MCF 10A (cell line): ENCODE measurements at regions of chr16 and their contacts with region 1.

Region 1: DNA sequence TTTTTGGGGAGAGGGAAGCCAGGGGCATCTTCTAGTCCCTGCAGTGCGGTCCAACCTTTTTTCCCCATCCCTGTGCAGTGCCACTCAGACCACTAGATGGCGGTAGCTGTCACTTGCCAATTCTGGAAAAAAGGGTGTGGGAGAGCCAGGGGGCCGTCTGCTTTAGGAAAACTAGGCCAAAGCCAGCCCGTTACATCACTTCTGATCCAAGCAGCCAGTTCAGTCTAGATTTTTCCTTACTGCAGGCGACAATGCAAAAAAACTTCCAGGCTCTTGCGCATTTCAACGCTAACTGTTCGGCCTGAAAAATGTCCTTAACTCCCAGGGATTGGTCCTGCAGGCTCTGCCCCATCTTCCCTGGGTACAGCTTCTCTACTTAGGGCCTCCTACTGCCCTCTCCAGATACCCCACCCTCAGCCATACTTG is 69.2 kb upstream of the CES5A start:
- DNase-seq: peak; percentile 70
- H3K4me3 Mint-ChIP-seq: no peak overlapping the region
- H3K27ac Mint-ChIP-seq: no peak overlapping the region
- H3K4me1 Mint-ChIP-seq: peaks cover 6% of the 10 kb centered on the region
- H3K27me3 Mint-ChIP-seq: peaks cover 68% of the 10 kb centered on the region
- CTCF ChIP-seq: peak; percentile 88

Region 2: GRCh38 chr16:55922662-55923061 is 21.7 kb before region 1 on chr16:
- CTCF ChIA-PET with region 1: no interaction called
- POLR2A ChIA-PET with region 1: no interaction called
- intact Hi-C with region 1: no loop called
- DNase-seq: no peak
- H3K4me3 Mint-ChIP-seq: no peak overlapping the region
- H3K27ac Mint-ChIP-seq: no peak overlapping the region
- H3K4me1 Mint-ChIP-seq: no peaks in the 10 kb centered on the region
- H3K27me3 Mint-ChIP-seq: peaks cover 58% of the 10 kb centered on the region
- CTCF ChIP-seq: no peak

Region 3: DNA sequence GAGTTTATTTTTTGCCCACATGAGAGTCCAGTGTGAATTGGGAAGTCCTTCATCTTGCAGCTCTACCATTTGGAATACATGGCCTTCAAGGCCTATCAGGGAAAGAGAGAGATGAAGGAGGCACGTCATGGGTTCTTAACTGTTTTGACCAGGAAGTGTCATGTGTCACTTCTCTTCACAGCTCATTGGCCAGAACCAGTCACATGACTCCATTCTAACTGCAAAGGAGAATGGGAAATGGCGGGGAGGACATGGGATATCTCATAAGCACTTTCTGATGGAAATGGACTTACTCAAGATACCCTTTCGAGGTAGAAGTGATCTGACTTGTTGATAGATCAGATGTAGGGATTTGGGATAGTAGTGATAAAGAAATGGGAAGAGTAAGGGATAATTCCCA is 11.4 kb before region 1 on chr16:
- CTCF ChIA-PET with region 1: interaction called, 13 read pairs
- POLR2A ChIA-PET with region 1: no interaction called
- intact Hi-C with region 1: no loop called
- DNase-seq: no peak
- H3K4me3 Mint-ChIP-seq: no peak overlapping the region
- H3K27ac Mint-ChIP-seq: no peak overlapping the region
- H3K4me1 Mint-ChIP-seq: no peaks in the 10 kb centered on the region
- H3K27me3 Mint-ChIP-seq: peaks cover 32% of the 10 kb centered on the region
- CTCF ChIP-seq: no peak

Region 4: GRCh38 chr16:55971447-55971846 is 27.1 kb after region 1 on chr16:
- CTCF ChIA-PET with region 1: interaction called, 15 read pairs
- POLR2A ChIA-PET with region 1: interaction called, 3 read pairs
- intact Hi-C with region 1: no loop called
- DNase-seq: no peak
- H3K4me3 Mint-ChIP-seq: no peak overlapping the region
- H3K27ac Mint-ChIP-seq: no peak overlapping the region
- H3K4me1 Mint-ChIP-seq: no peaks in the 10 kb centered on the region
- H3K27me3 Mint-ChIP-seq: peaks cover 16% of the 10 kb centered on the region
- CTCF ChIP-seq: no peak

Region 5: DNA sequence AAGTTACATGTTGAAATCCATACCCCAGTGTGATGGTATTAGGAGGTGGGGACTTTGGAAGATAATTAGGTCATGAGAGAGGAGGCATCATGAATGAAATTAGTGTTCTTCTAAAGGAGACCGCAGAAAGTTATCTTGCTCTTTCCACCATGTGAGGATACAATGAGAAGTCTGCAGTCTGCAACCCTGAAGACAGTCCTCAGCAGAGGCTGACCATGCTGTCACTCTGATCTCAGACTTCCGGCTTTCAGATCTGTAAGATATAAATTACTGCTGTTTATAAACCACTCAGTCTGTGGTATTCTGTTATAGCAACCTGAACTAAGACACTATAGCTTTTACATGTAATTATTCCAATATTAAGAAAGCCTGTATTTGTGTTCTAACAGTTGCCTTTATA is 47.5 kb after region 1 on chr16:
- CTCF ChIA-PET with region 1: no interaction called
- POLR2A ChIA-PET with region 1: no interaction called
- intact Hi-C with region 1: no loop called
- DNase-seq: no peak
- H3K4me3 Mint-ChIP-seq: no peak overlapping the region
- H3K27ac Mint-ChIP-seq: no peak overlapping the region
- H3K4me1 Mint-ChIP-seq: no peaks in the 10 kb centered on the region
- H3K27me3 Mint-ChIP-seq: peaks cover 9% of the 10 kb centered on the region
- CTCF ChIP-seq: no peak

Region 6: GRCh38 chr16:56125922-56126321 is 181.5 kb after region 1 on chr16:
- CTCF ChIA-PET with region 1: no interaction called
- POLR2A ChIA-PET with region 1: no interaction called
- intact Hi-C with region 1: no loop called
- DNase-seq: no peak
- H3K4me3 Mint-ChIP-seq: no peak overlapping the region
- H3K27ac Mint-ChIP-seq: no peak overlapping the region
- H3K4me1 Mint-ChIP-seq: no peaks in the 10 kb centered on the region
- H3K27me3 Mint-ChIP-seq: peaks cover 93% of the 10 kb centered on the region
- CTCF ChIP-seq: no peak

Region 7: GRCh38 chr16:56211435-56211981 is 267.1 kb after region 1 on chr16:
- CTCF ChIA-PET with region 1: no interaction called
- POLR2A ChIA-PET with region 1: no interaction called
- intact Hi-C with region 1: no loop called
- DNase-seq: no peak
- H3K4me3 Mint-ChIP-seq: no peak overlapping the region
- H3K27ac Mint-ChIP-seq: no peak overlapping the region
- H3K4me1 Mint-ChIP-seq: no peaks in the 10 kb centered on the region
- H3K27me3 Mint-ChIP-seq: peaks cover 66% of the 10 kb centered on the region
- CTCF ChIP-seq: no peak

Region 8: GRCh38 chr16:56281256-56281805 is 336.9 kb after region 1 on chr16:
- CTCF ChIA-PET with region 1: interaction called, 5 read pairs
- POLR2A ChIA-PET with region 1: no interaction called
- intact Hi-C with region 1: loop called (anchors 1 kb)
- DNase-seq: peak; percentile 31
- H3K4me3 Mint-ChIP-seq: no peak overlapping the region
- H3K27ac Mint-ChIP-seq: no peak overlapping the region
- H3K4me1 Mint-ChIP-seq: no peaks in the 10 kb centered on the region
- H3K27me3 Mint-ChIP-seq: peaks cover 37% of the 10 kb centered on the region
- CTCF ChIP-seq: peak; percentile 29

Region 9: DNA sequence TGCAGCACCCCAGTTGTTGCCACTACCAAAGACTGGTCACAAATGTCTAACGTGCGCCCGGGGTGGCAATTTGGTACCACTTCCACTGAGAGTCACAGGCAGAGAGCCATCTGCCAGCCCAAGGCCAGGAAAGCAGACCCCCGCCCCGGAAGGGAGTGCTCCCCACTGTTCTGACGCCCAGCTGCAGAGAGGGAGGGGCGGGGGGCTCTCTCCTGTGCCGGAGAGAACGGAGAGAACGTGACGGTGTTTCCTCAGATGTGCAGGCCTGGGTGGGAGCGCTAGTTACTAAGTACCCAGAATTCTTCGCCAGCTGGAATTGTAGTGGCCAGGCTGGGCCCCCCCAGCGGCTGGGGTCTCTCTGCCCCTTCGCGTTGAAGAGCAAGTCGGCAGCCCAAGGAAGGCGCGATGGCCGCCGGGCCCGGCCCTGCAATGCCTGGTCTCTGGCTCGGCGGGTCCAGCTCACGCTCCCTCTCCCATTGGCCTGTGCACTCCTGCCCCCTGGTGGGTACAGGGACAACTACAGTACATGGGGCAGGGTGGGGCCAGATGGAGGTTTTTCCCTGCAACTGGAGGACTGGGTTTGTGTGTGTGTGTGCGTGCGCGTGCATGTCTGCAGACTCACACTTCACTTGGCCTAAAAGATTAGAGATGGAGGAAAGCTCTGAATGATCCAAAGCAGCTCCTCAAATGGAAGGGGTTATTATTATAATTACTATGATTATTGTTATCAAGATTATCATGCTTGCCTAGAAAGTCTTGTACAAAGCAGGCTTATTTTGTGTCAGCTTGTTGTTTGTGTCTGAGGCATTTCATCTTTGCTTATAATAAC is 373.8 kb after region 1 on chr16:
- CTCF ChIA-PET with region 1: interaction called, 205 read pairs
- POLR2A ChIA-PET with region 1: interaction called, 5 read pairs
- intact Hi-C with region 1: loop called (anchors 1 kb)
- DNase-seq: peak; percentile 79
- H3K4me3 Mint-ChIP-seq: no peak overlapping the region
- H3K27ac Mint-ChIP-seq: no peak overlapping the region
- H3K4me1 Mint-ChIP-seq: no peaks in the 10 kb centered on the region
- H3K27me3 Mint-ChIP-seq: peaks cover 30% of the 10 kb centered on the region
- CTCF ChIP-seq: peak; percentile 96